K562 (cell line): ENCODE measurements at regions of chr3 and their contacts with region 1.

Region 1: DNA sequence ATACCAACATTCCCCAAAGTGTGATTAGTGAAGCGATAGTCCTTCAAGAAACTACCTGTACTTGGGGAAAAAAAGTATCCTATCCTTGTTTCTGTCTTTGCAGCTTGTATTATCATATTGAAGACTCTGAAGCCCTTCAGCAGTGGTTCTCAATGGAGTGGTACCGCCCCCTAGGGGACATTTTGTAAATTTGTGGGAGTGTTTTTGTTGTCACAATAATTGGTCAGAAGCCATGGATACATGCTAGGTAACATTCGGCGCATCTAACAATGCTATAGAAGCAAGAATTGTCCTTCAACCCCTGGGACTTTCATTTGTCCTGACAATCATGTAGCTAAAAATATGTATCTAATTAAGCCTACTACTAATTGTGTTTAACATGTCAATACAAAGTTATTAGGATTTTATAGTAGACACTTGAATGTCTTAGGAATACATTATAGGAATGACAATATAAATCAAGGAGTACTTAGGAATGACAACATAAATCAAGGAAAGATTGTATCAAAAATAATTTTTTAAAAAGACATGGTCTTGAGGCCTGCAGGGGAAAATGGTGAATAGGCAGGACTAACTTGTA is 53.7 kb downstream of the NMD3 start:
- DNase-seq: peak; percentile 45 to 69 (median 60)
- ATAC-seq: peak; percentile 94
- H3K4me3 ChIP-seq: no peak overlapping the region
- H3K27ac ChIP-seq: no peak overlapping the region
- H3K4me1 ChIP-seq: no peaks in the 10 kb centered on the region
- H3K27me3 ChIP-seq: no peaks in the 10 kb centered on the region
- CTCF ChIP-seq: peak; percentile 57 to 75 (median 73); a peak in 5 of 6 replicates
- EP300 ChIP-seq: no peak
- POLR2A ChIP-seq: no peak
- RAD21 ChIP-seq: peak; percentile 16 to 66; a peak in 3 of 4 replicates

Region 2: GRCh38 chr3:160707187-160707794 is 567.5 kb before region 1 on chr3:
- CTCF ChIA-PET with region 1: no interaction called
- POLR2A ChIA-PET with region 1: no interaction called
- in situ Hi-C with region 1: no loop called
- intact Hi-C with region 1: loop called (anchors 10 kb)
- DNase-seq: peak in 2 of 4 experiments; percentile 27 to 47
- ATAC-seq: peak; percentile 73
- H3K4me3 ChIP-seq: no peak overlapping the region
- H3K27ac ChIP-seq: no peak overlapping the region
- H3K4me1 ChIP-seq: no peaks in the 10 kb centered on the region
- H3K27me3 ChIP-seq: no peaks in the 10 kb centered on the region
- CTCF ChIP-seq: peak; percentile 19 to 67 (median 44); a peak in 4 of 6 replicates
- EP300 ChIP-seq: no peak
- POLR2A ChIP-seq: no peak
- RAD21 ChIP-seq: peak; percentile 71 to 73

Region 3: GRCh38 chr3:160921020-160921635 is 353.7 kb before region 1 on chr3:
- CTCF ChIA-PET with region 1: no interaction called
- POLR2A ChIA-PET with region 1: no interaction called
- in situ Hi-C with region 1: no loop called
- intact Hi-C with region 1: loop called (anchors 1 kb)
- DNase-seq: peak; percentile 32 to 55 (median 46)
- ATAC-seq: peak; percentile 96
- H3K4me3 ChIP-seq: no peak overlapping the region
- H3K27ac ChIP-seq: no peak overlapping the region
- H3K4me1 ChIP-seq: no peaks in the 10 kb centered on the region
- H3K27me3 ChIP-seq: no peaks in the 10 kb centered on the region
- CTCF ChIP-seq: peak; percentile 68 to 86 (median 74)
- EP300 ChIP-seq: no peak
- POLR2A ChIP-seq: no peak
- RAD21 ChIP-seq: peak; percentile 75 to 80

Region 4: GRCh38 chr3:160941885-160942494 is 332.8 kb before region 1 on chr3:
- CTCF ChIA-PET with region 1: no interaction called
- POLR2A ChIA-PET with region 1: no interaction called
- in situ Hi-C with region 1: no loop called
- intact Hi-C with region 1: loop called (anchors 5 kb)
- DNase-seq: peak; percentile 28 to 75 (median 36)
- ATAC-seq: peak; percentile 80
- H3K4me3 ChIP-seq: no peak overlapping the region
- H3K27ac ChIP-seq: no peak overlapping the region
- H3K4me1 ChIP-seq: no peaks in the 10 kb centered on the region
- H3K27me3 ChIP-seq: no peaks in the 10 kb centered on the region
- CTCF ChIP-seq: peak; percentile 53 to 79 (median 74); a peak in 5 of 6 replicates
- EP300 ChIP-seq: no peak
- POLR2A ChIP-seq: no peak
- RAD21 ChIP-seq: peak; percentile 78 to 85

Region 5: DNA sequence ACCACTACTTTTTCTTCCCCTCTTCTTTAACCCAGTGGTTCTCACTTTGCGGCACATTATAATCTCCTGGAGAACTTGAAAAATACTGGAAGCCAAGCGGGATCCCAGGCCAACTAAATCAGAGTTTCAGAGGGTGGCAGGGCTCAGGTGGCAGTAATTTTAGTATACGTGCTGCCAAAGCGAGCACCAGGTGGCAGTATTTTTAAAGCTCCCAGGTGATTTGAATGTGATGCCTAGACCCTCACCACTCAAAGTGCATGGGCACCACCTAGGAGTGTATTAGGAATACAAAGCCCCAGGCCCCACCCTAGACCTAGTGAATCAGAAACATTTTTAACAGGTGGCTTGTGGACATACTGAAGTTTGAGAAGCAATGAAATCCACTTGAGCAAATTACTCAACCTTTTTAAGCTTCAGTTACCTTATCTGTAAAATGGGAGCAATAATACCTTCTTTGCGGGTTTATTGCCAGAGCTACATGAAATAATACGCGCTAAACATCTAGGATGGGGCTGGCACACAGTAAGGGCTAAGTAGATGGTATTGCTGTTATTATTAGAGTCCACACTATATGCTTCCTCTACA is 177.9 kb before region 1 on chr3:
- CTCF ChIA-PET with region 1: interaction called, 12 read pairs
- POLR2A ChIA-PET with region 1: no interaction called
- in situ Hi-C with region 1: no loop called
- intact Hi-C with region 1: loop called (anchors 5 kb)
- DNase-seq: peak in 1 of 4 experiments; percentile 9
- ATAC-seq: no peak; the same call in 2 of the 3 replicates
- H3K4me3 ChIP-seq: no peak overlapping the region
- H3K27ac ChIP-seq: no peak overlapping the region
- H3K4me1 ChIP-seq: no peaks in the 10 kb centered on the region
- H3K27me3 ChIP-seq: peaks cover 0 to 6% of the 10 kb centered on the region in 2 experiments; a peak in 1 of 5 replicates
- CTCF ChIP-seq: peak; percentile 18 to 29 (median 23); a peak in 2 of 6 replicates
- EP300 ChIP-seq: no peak
- POLR2A ChIP-seq: no peak
- RAD21 ChIP-seq: peak in 1 of 2 experiments; percentile 24; a peak in 1 of 4 replicates

Region 6: GRCh38 chr3:161409069-161409468 is 134.3 kb after region 1 on chr3:
- CTCF ChIA-PET with region 1: interaction called, 10 read pairs
- POLR2A ChIA-PET with region 1: no interaction called
- in situ Hi-C with region 1: no loop called
- intact Hi-C with region 1: loop called (anchors 1 kb)
- DNase-seq: peak in 3 of 4 experiments; percentile 11 to 44 (median 14)
- ATAC-seq: peak; percentile 67; the same call in 2 of the 3 replicates
- H3K4me3 ChIP-seq: no peak overlapping the region
- H3K27ac ChIP-seq: no peak overlapping the region
- H3K4me1 ChIP-seq: no peaks in the 10 kb centered on the region
- H3K27me3 ChIP-seq: no peaks in the 10 kb centered on the region
- CTCF ChIP-seq: peak; percentile 37 to 58 (median 44); a peak in 4 of 6 replicates
- EP300 ChIP-seq: no peak
- POLR2A ChIP-seq: no peak
- RAD21 ChIP-seq: peak; percentile 31 to 53

Region 7: GRCh38 chr3:161423911-161424522 is 149.2 kb after region 1 on chr3:
- CTCF ChIA-PET with region 1: interaction called, 10 read pairs
- POLR2A ChIA-PET with region 1: no interaction called
- in situ Hi-C with region 1: no loop called
- intact Hi-C with region 1: loop called (anchors 1 kb)
- DNase-seq: peak; percentile 35 to 59 (median 48)
- ATAC-seq: peak; percentile 77
- H3K4me3 ChIP-seq: no peak overlapping the region
- H3K27ac ChIP-seq: no peak overlapping the region
- H3K4me1 ChIP-seq: no peaks in the 10 kb centered on the region
- H3K27me3 ChIP-seq: no peaks in the 10 kb centered on the region
- CTCF ChIP-seq: peak; percentile 26 to 75 (median 41); a peak in 5 of 6 replicates
- EP300 ChIP-seq: no peak
- POLR2A ChIP-seq: no peak
- RAD21 ChIP-seq: peak; percentile 81

Region 8: GRCh38 chr3:162643245-162643644 is 1368.4 kb after region 1 on chr3:
- CTCF ChIA-PET with region 1: no interaction called
- POLR2A ChIA-PET with region 1: no interaction called
- in situ Hi-C with region 1: no loop called
- intact Hi-C with region 1: no loop called
- DNase-seq: no peak
- ATAC-seq: no peak
- H3K4me3 ChIP-seq: no peak overlapping the region
- H3K27ac ChIP-seq: no peak overlapping the region
- H3K4me1 ChIP-seq: no peaks in the 10 kb centered on the region
- H3K27me3 ChIP-seq: no peaks in the 10 kb centered on the region
- CTCF ChIP-seq: no peak
- EP300 ChIP-seq: no peak
- POLR2A ChIP-seq: no peak
- RAD21 ChIP-seq: no peak